Panc1 (cell line): ENCODE measurements at regions of chr5 and their contacts with region 1.

Region 1: GRCh38 chr5:95697781-95698681 is 15.2 kb upstream of the SPATA9 start:
- DNase-seq: no peak
- ATAC-seq: peak; percentile 92
- H3K4me3 ChIP-seq: peak overlapping the region in 1 of 2 experiments; percentile 24; a peak in 2 of 4 replicates
- H3K27ac ChIP-seq: peak overlapping the region; percentile 61
- H3K4me1 ChIP-seq: peaks cover 20% of the 10 kb centered on the region; the same call in 1 of the 2 replicates
- H3K27me3 ChIP-seq: no peaks in the 10 kb centered on the region
- CTCF ChIP-seq: no peak

Region 2: GRCh38 chr5:95530416-95530815 is 167.6 kb before region 1 on chr5:
- CTCF ChIA-PET with region 1: no interaction called
- POLR2A ChIA-PET with region 1: no interaction called
- in situ Hi-C with region 1: no loop called
- intact Hi-C with region 1: no loop called
- DNase-seq: peak; percentile 36
- ATAC-seq: no peak
- H3K4me3 ChIP-seq: no peak overlapping the region
- H3K27ac ChIP-seq: no peak overlapping the region
- H3K4me1 ChIP-seq: no peaks in the 10 kb centered on the region
- H3K27me3 ChIP-seq: no peaks in the 10 kb centered on the region
- CTCF ChIP-seq: no peak

Region 3: GRCh38 chr5:95718203-95718602 is 20.2 kb after region 1 on chr5:
- CTCF ChIA-PET with region 1: no interaction called
- POLR2A ChIA-PET with region 1: interaction called, 13 read pairs
- in situ Hi-C with region 1: no loop called
- intact Hi-C with region 1: no loop called
- DNase-seq: no peak
- ATAC-seq: no peak
- H3K4me3 ChIP-seq: no peak overlapping the region
- H3K27ac ChIP-seq: no peak overlapping the region; the same call in 1 of the 2 replicates
- H3K4me1 ChIP-seq: peaks cover 5% of the 10 kb centered on the region; the same call in 1 of the 2 replicates
- H3K27me3 ChIP-seq: no peaks in the 10 kb centered on the region
- CTCF ChIP-seq: no peak